Right ventricle myocardium inferior (tissue), 1 donor: ENCODE measurements at regions of chr3 and their contacts with region 1.

Region 1: DNA sequence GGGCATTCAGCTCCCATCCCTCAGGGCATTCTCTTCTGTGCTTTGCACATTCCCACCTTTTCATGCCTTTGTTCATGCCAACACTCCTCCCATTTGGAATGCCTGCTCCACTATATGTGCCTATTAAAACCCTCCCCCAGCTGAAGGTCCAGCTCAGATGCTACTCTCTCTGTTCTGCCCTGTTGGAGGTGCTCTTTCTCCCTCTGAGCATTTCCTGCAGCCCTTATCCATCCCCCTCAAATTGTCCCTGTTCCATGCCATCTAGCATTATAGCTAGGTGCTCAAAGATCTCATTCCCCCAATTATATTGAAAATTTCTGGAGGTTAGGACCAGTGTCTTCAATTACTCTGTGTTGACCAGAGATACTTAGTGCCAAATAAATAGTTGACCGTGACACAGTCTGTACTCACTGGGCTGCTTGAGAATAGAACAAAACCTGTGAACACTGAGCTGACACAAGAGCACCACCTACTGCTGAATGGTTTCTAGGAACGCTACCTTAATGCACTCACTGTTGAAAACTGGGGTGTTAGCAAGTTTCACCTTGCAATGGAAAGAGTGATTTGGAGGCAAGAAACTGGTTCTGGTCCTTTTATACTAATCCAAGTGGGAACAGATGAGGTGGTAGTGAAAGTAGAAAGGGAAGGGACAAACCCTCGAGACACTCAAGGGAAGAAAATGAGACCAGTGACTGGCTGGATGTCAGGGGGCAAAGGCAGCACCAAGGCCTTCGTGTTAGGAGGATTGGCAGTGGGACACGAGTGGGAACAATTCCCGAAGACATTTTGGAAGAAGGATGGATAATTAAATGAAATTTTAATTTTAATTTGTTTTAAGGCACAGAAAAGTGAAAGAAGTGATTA is 289.8 kb upstream of the ROPN1 start:
- DNase-seq: no peak
- ATAC-seq: peak; percentile 51

Region 2: GRCh38 chr3:124014366-124014942 is 267.2 kb before region 1 on chr3:
- intact Hi-C with region 1: loop called (anchors 1 kb)
- DNase-seq: no peak
- ATAC-seq: no peak

Region 3: DNA sequence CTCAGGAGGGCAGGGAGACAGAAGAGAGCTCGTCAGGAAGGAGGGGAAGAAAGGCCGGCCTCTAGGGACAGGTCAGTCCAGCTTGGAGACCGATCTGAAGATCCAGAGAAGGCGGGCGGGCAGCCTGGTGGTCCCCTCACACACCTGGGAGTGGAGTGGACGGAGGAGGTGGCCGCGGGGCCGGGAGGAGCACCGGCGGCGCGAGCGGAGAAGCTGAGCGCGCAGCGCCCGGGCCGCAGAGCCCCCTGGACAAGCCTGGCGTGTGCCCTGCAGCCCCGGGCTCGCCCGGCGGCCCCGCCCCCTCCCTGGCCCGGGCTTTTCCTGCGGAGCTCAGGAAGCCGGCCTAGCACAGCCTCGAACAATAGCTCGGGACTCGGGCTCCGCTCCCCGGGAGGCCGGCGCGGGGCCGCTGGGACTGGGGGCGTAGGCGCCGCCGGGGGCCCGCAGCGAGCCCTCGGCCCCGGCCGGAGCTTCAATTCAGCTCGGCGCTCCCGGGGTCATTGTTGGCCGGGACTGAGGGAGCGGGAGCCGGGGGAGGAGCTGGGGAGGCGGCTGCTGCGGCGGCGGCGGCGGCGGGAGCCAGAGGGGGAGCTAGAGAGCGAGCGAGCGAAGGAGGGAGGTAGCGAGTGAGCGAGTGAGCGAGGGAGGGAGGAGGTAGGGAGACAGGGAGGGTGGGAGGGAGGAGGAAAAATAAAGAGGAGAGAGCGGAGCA is 248.9 kb before region 1 on chr3:
- intact Hi-C with region 1: loop called (anchors 2 kb)
- DNase-seq: peak; percentile 89
- ATAC-seq: peak; percentile 96

Region 4: GRCh38 chr3:124084022-124084881 is 197.4 kb before region 1 on chr3:
- intact Hi-C with region 1: loop called (anchors 5 kb)
- DNase-seq: no peak
- ATAC-seq: peak; percentile 37

Region 5: GRCh38 chr3:124246949-124247348 is 34.7 kb before region 1 on chr3:
- intact Hi-C with region 1: loop called (anchors 1 kb)
- DNase-seq: no peak
- ATAC-seq: no peak

Region 6: DNA sequence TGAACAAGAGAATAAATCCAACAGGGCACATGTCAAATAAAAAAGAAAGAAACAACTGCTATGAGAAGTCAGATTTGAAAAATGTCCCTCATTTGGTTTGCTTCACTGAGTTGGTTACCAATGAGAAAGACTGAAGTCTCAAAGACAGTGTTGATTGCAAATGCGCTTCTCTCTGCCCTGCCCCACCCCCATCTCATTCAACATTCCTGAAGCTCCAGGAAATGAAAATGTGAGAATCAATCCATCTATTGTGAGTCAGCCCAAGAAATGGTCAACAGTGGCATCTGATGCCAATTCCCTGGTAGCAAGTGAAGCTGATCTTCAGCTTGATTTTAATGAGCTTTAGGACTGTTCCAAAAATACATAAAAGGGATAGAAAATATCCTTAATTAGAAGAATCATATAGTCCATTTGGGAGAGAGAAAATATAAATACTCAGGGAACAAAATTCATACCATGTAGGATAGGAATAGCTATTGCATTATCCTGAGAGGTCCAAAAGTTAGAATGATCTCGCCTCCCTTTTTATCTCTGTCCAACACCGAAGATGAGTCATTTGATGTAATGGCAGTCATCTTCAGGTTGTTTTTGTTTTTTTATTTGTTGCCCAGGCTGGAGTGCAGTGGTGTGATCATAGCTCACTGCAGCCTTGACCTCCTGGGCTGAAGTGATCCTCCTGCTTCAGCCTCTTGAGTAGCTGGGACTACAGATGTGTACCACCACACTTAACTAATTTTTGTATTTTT is 248.3 kb after region 1 on chr3:
- intact Hi-C with region 1: no loop called
- DNase-seq: no peak
- ATAC-seq: no peak